ENCODE measurements at regions of chr10 and their contacts with region 1.

Region 1: DNA sequence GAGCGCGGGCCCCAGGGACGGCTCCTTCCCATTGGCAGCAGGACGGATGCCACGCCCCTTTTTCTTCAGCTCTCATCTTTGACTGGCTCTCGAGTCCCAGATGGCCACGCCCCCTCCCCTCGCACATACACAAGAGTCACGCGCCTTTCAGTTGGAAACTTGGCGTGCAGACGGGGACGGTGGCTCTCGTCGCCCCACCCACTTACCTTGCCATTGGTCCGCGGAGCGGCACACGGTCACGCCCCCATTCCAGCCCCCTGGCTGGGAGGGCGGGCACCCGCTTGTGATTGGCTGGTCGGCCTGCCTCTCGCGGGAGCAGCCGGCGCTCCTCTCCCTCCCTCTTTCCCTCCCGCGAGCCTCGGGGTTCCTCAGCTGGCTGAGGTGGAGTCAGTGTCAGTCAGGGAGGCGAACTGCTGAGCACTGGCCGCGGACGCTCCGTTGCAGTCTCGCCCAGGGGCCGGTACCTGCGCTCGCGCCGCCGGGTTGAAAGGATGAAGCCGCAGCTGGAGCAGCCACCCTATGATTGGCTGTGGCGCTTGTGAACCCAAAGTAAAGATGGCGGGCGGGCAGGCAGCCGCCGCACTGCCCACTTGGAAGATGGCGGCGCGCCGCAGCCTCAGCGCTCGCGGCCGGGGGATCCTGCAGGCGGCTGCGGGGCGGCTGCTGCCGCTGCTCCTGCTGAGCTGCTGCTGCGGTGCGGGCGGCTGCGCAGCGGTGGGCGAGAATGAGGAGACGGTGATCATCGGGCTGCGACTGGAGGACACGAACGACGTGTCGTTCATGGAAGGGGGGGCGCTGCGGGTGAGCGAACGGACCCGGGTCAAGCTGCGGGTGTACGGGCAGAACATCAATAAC is at the start of gene CNNM2:
- DNase-seq: peak; percentile 100
- H3K4me3 Mint-ChIP-seq: peak within 1 kb of the TSS; percentile 91
- H3K27ac Mint-ChIP-seq: peak within 1 kb of the TSS; percentile 93
- H3K4me1 Mint-ChIP-seq: peaks cover 67% of the 10 kb centered on the region
- H3K27me3 Mint-ChIP-seq: peaks cover 15% of the 10 kb centered on the region

Region 2: GRCh38 chr10:102835007-102835482 is 83.1 kb before region 1 on chr10:
- CTCF ChIA-PET with region 1: interaction called, 10 read pairs
- DNase-seq: peak; percentile 85
- H3K4me3 Mint-ChIP-seq: no peak overlapping the region
- H3K27ac Mint-ChIP-seq: no peak overlapping the region
- H3K4me1 Mint-ChIP-seq: no peaks in the 10 kb centered on the region
- H3K27me3 Mint-ChIP-seq: peaks cover 15% of the 10 kb centered on the region

Region 3: DNA sequence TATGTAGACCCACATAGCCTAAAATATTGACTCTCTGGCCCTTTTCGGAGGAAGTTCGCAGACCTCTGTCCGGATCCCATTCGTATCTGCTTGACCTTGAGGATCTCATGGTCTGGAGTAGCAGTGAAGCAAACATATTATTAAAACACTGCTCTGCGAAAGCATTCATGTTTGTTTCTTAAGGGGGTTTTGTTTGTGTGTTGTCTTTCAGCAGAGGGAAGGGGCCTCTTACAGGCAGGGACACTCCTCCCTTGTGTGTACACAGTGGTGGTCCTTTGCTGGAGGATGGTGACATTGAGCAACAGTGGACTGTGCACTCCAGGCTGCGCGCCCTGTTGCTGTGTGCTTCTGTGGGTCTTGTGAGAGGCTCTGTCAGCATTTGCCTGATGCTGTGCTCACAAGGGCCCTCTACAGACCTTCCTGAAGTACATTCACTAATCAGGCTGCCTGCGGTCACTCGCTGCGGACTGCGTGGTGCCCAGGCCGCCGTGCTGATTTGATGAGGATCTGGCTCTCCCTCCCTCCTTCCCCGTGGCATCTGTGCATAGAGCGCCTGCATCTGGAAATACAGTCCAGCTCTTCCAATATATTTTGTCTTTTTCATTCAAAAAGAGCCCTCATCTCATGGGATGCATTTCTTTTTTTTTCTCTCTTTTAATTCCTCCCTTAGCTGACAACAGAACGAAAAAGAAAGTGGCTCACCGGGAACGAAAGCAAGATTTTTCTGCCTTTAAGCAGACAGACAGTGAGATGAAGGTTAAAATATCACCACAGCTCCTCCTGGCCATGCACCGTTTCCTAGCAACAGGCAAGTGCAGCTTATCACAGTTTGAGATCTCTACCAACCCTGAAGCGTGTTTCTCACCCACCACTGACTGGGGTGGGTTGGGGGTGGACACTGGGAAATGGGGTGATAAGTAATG is 135.7 kb after region 1 on chr10:
- CTCF ChIA-PET with region 1: interaction called, 14 read pairs
- DNase-seq: peak; percentile 84
- H3K4me3 Mint-ChIP-seq: peak overlapping the region; percentile 78
- H3K27ac Mint-ChIP-seq: peak overlapping the region; percentile 93
- H3K4me1 Mint-ChIP-seq: peaks cover 36% of the 10 kb centered on the region
- H3K27me3 Mint-ChIP-seq: no peaks in the 10 kb centered on the region

Region 4: DNA sequence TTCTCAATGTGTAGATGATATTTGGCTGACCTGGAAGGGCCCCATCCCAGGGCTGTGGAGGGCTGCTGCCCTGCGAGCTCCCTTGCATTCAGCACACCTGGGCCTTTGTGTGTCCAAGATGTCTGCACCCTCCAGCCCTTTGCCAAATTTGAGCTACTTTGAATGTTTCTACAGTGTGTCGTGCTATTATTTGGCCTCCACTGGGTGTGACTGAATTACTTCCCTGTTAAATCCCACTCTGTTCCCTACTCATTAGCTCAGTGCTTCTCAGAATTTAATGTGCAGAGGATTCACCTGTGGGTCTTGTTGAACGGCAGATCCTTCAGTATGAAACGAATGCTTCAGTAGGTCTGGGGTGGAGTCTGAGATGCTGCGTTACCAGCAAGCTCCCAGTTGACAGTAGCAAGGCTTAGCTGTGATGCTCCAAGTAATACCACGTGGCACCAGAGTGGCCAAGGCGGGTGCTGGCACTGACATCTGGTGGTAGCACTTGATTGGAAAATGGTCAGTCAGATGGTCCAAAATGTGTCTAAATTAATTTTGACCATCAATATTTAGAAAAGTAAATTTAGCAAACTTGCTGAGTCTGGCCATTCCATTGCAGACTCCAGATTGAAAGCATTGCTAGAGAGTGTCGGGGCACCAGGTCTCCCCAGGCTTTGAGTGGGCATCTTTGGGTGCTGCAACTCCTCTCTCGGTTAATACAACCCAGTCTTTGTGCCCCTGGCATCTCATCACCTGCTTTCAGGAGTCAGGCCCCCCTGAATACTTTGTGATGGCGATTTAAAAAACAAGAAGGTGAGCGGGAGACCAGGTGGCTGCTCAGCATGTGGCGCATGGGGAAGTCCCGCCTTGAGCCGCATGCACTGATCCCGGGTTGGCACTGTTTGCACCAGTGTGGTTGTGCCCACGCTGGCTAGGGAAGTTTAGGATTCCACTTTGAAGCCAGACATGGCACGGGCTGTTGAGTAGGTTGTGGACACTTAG is 144.7 kb after region 1 on chr10:
- CTCF ChIA-PET with region 1: interaction called, 69 read pairs
- DNase-seq: no peak
- H3K4me3 Mint-ChIP-seq: no peak overlapping the region
- H3K27ac Mint-ChIP-seq: no peak overlapping the region
- H3K4me1 Mint-ChIP-seq: peaks cover 2% of the 10 kb centered on the region
- H3K27me3 Mint-ChIP-seq: no peaks in the 10 kb centered on the region

Region 5: GRCh38 chr10:103069453-103070331 is 151.5 kb after region 1 on chr10:
- CTCF ChIA-PET with region 1: interaction called, 69 read pairs
- DNase-seq: peak; percentile 83
- H3K4me3 Mint-ChIP-seq: no peak overlapping the region
- H3K27ac Mint-ChIP-seq: peak overlapping the region; percentile 75
- H3K4me1 Mint-ChIP-seq: peaks cover 40% of the 10 kb centered on the region
- H3K27me3 Mint-ChIP-seq: no peaks in the 10 kb centered on the region

Region 6: GRCh38 chr10:103244663-103245271 is 326.6 kb after region 1 on chr10:
- CTCF ChIA-PET with region 1: interaction called, 30 read pairs
- DNase-seq: peak; percentile 76
- H3K4me3 Mint-ChIP-seq: no peak overlapping the region
- H3K27ac Mint-ChIP-seq: no peak overlapping the region
- H3K4me1 Mint-ChIP-seq: peaks cover 21% of the 10 kb centered on the region
- H3K27me3 Mint-ChIP-seq: peaks cover 7% of the 10 kb centered on the region

Measured in activated naive CD4-positive, alpha-beta T cell treated with anti-CD3 and anti-CD28 coated beads, Interleukin-2, amount 10 ng/mL, durations not matched to agents 7 days and 5 days (primary cell).